GM10248 (cell line): ENCODE measurements at regions of chr7 and their contacts with region 1.

Region 1: GRCh38 chr7:99990460-99990852 is 14.6 kb upstream of the AZGP1 start:
- DNase-seq: no peak
- CTCF ChIP-seq: no peak

Region 2: DNA sequence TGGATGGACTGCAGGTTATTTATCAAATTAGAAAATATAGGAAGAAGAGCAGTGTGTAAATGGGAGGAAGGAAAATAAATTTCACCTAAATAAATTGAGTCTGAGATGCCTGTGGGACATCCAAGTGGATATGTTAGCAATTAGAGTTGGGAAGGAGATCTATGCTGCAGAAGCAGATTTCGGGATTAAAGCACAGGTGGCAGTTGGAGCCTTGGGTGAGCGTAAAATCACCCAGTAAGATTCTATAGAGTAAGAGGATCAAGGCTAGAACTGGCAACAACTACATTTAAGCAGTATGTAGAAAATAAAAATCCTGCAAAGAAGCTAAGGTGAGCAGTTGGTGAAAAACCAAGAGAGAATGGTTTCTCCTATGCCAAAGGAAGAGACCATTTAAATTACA is 79.5 kb before region 1 on chr7:
- CTCF ChIA-PET with region 1: interaction called, 58 read pairs
- POLR2A ChIA-PET with region 1: no interaction called
- DNase-seq: no peak
- CTCF ChIP-seq: no peak

Region 3: DNA sequence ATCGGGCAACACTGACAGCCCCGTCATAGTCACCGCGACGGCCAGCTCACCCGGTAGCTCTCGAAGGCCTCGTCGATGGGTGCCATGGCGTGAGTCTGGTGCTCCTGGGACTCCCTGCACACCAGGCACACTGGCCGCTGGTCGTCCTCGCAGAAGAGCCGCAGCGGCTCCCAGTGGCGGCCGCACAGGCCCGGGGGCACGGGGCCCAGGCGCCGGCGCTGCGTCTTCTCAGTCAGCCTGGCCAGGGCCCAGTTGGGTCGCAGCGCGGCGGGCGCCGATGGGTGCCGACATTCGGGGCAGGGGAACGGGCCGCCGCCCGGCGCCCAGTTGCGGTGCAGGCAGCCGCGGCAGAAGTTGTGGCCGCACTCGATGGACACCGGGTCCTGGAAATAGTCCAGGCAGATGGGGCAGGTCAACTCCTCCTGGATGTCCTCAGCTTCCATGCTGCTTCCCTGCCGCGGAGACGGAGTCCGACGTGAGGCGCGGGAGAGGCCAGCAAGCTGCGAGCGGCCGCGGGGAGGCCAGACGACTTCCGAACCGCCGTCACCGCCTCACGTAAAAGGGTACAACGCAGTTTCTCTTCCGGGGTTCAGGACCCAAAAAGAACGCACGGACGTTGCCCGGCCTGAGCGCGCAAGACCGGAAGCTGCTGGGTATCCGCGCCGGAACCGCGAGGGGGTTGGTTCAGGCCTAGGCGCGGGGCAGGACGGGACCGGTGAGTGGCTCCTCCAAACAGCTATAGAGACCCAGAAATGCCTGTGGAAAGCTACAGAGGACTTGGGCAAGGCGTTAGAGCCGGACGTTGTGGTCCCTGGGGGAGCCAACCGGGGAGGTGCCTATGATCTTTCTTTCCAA is 71.3 kb before region 1 on chr7 and contains the start of gene TRIM4:
- CTCF ChIA-PET with region 1: interaction called, 58 read pairs
- POLR2A ChIA-PET with region 1: interaction called, 4 read pairs
- DNase-seq: peak; percentile 95
- CTCF ChIP-seq: peak; percentile 27

Region 4: GRCh38 chr7:99975782-99976521 is 14.5 kb before region 1 on chr7 and contains the start of gene AZGP1:
- CTCF ChIA-PET with region 1: interaction called, 28 read pairs
- POLR2A ChIA-PET with region 1: no interaction called
- DNase-seq: no peak
- CTCF ChIP-seq: no peak

Region 5: DNA sequence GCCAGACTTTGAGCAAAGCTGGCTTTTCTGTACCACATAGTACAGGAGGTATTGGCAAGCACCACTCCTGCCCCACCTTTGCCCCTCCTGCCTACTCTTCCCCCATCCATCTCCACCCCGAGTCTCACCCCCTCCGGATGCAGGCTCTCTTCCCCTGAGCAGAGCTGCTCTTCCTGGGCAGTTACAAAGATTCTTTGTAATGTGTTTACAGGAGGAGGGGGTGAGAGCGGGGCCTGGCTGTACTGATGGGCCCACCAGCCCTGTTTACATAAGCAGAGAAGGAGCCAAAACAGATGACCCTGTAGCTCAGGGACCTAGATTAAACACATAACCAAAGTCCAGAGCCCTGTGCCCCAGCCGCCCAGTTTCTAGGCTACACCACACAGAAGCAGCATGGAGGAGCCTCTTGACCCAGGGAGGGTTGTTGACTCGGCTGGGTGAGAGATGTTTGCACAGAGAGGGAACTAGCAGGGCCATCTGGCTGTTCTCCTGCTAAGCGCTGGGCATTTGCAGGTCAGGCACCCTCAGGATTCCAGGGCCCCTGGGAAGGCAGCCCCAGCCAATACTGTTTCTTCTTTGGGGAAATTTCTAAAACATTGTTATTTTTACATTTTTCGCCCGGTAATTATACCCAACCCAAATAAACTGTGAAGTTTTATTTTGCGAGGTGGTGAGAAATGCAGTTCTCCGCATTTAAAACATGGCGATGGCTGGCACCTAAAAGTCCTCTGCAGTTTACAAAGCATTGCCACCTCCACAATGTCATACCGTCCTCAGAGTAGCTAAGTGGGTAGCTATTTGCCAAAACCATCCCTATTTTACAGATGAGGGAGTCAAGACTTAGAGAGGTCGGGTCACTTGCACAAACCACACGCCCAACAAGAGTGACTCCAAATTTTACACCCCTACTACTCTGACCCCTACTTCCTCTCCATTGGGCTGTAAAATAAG is 13.5 kb after region 1 on chr7:
- CTCF ChIA-PET with region 1: interaction called, 27 read pairs
- POLR2A ChIA-PET with region 1: no interaction called
- DNase-seq: no peak
- CTCF ChIP-seq: no peak

Region 6: GRCh38 chr7:100053215-100053614 is 62.8 kb after region 1 on chr7:
- CTCF ChIA-PET with region 1: interaction called, 22 read pairs
- POLR2A ChIA-PET with region 1: no interaction called
- DNase-seq: peak; percentile 40
- CTCF ChIP-seq: no peak

Region 7: DNA sequence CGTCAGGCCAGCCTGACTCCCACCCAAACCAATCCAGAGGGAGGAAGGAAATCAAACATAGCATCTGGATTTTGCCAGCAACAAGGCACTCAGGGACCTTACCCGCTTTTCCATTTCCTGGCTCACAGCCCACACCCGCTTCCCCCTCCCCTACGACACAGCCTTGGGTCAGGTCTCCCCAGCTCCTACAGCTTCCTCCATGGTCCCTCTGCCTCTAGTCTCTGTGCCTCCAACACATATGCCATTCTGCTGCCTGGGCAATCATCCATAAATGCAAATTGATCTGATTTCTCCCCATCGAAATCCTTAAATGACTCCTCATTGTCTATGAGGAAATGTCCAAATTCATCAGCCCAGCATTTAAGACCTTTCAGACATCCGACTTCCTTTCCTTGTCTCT is 1773.8 kb after region 1 on chr7:
- CTCF ChIA-PET with region 1: no interaction called
- POLR2A ChIA-PET with region 1: no interaction called
- DNase-seq: no peak
- CTCF ChIP-seq: no peak